ENCODE measurements at regions of chr15 and their contacts with region 1.

Region 1: GRCh38 chr15:89496155-89497098 is at the start of gene RHCG:
- DNase-seq: peak; percentile 83
- H3K4me3 Mint-ChIP-seq: peak within 1 kb of the TSS; percentile 68
- H3K27ac Mint-ChIP-seq: no peak within 1 kb of the TSS
- H3K4me1 Mint-ChIP-seq: peaks cover 38% of the 10 kb centered on the region
- H3K27me3 Mint-ChIP-seq: peaks cover 32% of the 10 kb centered on the region
- CTCF ChIP-seq: peak; percentile 71
- total RNA-seq, gene RHCG: 0.59 and 1.1 TPM in 2 replicates

Region 2: DNA sequence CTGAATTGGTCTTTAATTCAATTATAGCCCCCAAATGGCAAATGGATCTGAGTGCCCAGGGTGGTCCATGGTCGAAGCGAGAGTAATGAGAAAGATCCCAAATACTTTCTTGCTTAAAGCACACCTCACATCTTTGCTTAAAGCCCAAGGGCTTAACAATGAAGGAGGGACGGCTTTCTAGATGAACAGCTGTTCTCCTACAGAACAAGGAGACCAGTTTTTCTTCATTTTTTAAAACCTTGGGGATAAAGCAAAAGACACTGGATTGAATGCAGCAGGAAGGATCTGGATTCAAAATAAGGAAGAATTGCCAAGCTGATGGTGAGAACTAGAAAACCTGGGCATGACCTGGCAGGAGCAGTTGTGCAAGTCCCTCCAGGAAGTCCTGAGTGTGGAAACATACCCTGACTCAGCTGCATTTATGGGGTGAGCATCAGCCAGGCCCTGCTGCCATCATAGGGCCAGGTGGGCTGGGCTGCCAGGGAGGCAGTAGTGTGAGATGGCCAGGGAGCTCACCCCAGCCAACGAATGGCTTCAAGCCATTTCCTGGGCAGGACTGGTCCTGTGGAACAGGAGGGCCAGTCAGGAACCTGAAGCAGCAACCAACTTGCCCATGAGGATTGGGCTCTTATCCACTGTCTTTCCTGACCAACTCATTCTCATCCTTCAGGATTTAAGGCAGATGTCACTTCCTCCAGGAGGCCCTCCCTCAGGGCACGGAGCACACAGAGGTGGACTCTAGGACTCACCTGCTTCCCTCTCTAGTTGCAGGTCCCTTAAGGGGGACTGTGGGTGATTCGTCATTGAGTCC is 18.4 kb after region 1 on chr15:
- CTCF ChIA-PET with region 1: no interaction called
- intact Hi-C with region 1: no loop called
- DNase-seq: peak; percentile 53
- H3K4me3 Mint-ChIP-seq: no peak overlapping the region
- H3K27ac Mint-ChIP-seq: no peak overlapping the region
- H3K4me1 Mint-ChIP-seq: peaks cover 16% of the 10 kb centered on the region
- H3K27me3 Mint-ChIP-seq: peaks cover 46% of the 10 kb centered on the region
- CTCF ChIP-seq: no peak

Region 3: GRCh38 chr15:89556413-89557262 is 60.2 kb after region 1 on chr15:
- CTCF ChIA-PET with region 1: interaction called, 5 read pairs
- intact Hi-C with region 1: loop called (anchors 1 kb)
- DNase-seq: peak; percentile 74
- H3K4me3 Mint-ChIP-seq: no peak overlapping the region
- H3K27ac Mint-ChIP-seq: no peak overlapping the region
- H3K4me1 Mint-ChIP-seq: peaks cover 4% of the 10 kb centered on the region
- H3K27me3 Mint-ChIP-seq: peaks cover 10% of the 10 kb centered on the region
- CTCF ChIP-seq: peak; percentile 61

Region 4: DNA sequence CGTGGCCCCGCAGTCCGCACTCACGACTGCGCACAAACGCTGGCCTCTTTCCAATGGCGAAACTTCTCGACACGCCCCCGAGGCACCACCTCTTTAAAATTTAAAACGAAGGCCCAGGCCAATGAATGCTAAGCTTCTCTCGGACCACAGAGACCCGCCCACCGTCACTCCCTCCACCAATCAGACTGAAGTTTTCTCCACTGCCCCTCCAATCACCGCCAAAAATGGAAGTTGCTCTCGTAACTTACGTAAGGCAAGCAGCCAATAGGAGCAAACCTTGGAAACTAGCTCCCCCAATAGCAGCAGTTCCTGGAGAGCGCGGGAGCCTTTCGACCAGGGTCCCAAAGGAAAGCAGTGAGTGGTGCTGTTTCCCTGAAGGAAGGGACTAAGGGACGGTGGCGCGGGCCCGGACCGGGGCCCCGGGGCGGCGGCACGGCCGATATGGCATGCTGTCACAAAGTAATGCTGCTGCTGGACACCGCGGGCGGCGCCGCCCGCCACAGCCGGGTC is 78.8 kb after region 1 on chr15 and contains the start of gene TICRR:
- CTCF ChIA-PET with region 1: interaction called, 3 read pairs
- intact Hi-C with region 1: loop called (anchors 5 kb)
- DNase-seq: peak; percentile 98
- H3K4me3 Mint-ChIP-seq: peak within 1 kb of the TSS; percentile 70
- H3K27ac Mint-ChIP-seq: peak within 1 kb of the TSS; percentile 91
- H3K4me1 Mint-ChIP-seq: peaks cover 19% of the 10 kb centered on the region
- H3K27me3 Mint-ChIP-seq: no peaks in the 10 kb centered on the region
- CTCF ChIP-seq: no peak
- total RNA-seq, gene TICRR: 41.7 and 45.2 TPM in 2 replicates